ENCODE measurements at regions of chr5 and their contacts with region 1.

Region 1: GRCh38 chr5:132866342-132867045 is at the starts of genes GDF9 and UQCRQ:
- DNase-seq: peak; percentile 96 to 99 (median 98)
- ATAC-seq: peak; percentile 95 to 100 (median 97)
- H3K4me3 ChIP-seq: peak within 1 kb of the TSS; percentile 60 to 87 (median 76)
- H3K27ac ChIP-seq: peak within 1 kb of the TSS; percentile 97 to 99 (median 99)
- H3K4me1 ChIP-seq: peaks cover 2 to 43% (median 17%) of the 10 kb centered on the region in 4 donors
- H3K27me3 ChIP-seq: no peaks in the 10 kb centered on the region
- CTCF ChIP-seq: peak; percentile 20 to 46 (median 34)
- POLR2A ChIP-seq: peak; percentile 99
- total RNA-seq, gene GDF9: 0.20 to 0.71 (median 0.48) TPM
- total RNA-seq, gene UQCRQ: 488 to 702 (median 628) TPM

Region 2: GRCh38 chr5:132829742-132830435 is 36.6 kb before region 1 on chr5:
- intact Hi-C with region 1: loop called in 1 of 2 experiments (anchors 5 kb)
- DNase-seq: peak; percentile 85 to 86 (median 85)
- ATAC-seq: peak; percentile 67 to 80 (median 78)
- H3K4me3 ChIP-seq: peak overlapping the region; percentile 66 to 92 (median 74)
- H3K27ac ChIP-seq: peak overlapping the region; percentile 94 to 96 (median 95)
- H3K4me1 ChIP-seq: peaks cover 0 to 41% (median 10%) of the 10 kb centered on the region in 4 donors
- H3K27me3 ChIP-seq: no peaks in the 10 kb centered on the region
- CTCF ChIP-seq: peak; percentile 79 to 89 (median 87)
- POLR2A ChIP-seq: no peak

Measured in right lobe of liver (tissue), 6 donors.